ENCODE measurements at regions of chr2 and their contacts with region 1.

Region 1: GRCh38 chr2:176554101-176555048 is 285.1 kb downstream of the MTX2 start:
- DNase-seq: no peak
- H3K4me3 ChIP-seq: peak overlapping the region; percentile 34 to 48
- H3K27ac ChIP-seq: peak overlapping the region; percentile 42
- H3K4me1 ChIP-seq: peaks cover 11% of the 10 kb centered on the region
- H3K27me3 ChIP-seq: no peaks in the 10 kb centered on the region
- CTCF ChIP-seq: peak; percentile 73 to 77 (median 74)
- POLR2A ChIP-seq: no peak

Region 2: GRCh38 chr2:176140513-176141317 is 413.7 kb before region 1 on chr2:
- intact Hi-C with region 1: loop called (anchors 2 kb)
- DNase-seq: no peak
- H3K4me3 ChIP-seq: peak overlapping the region; percentile 42 to 44
- H3K27ac ChIP-seq: peak overlapping the region; percentile 57
- H3K4me1 ChIP-seq: peaks cover 18% of the 10 kb centered on the region
- H3K27me3 ChIP-seq: no peaks in the 10 kb centered on the region
- CTCF ChIP-seq: peak; percentile 76 to 94 (median 89)
- POLR2A ChIP-seq: no peak

Region 3: GRCh38 chr2:176638167-176639015 is 84.0 kb after region 1 on chr2:
- intact Hi-C with region 1: loop called (anchors 5 kb)
- DNase-seq: no peak
- H3K4me3 ChIP-seq: peak overlapping the region; percentile 58 to 84
- H3K27ac ChIP-seq: no peak overlapping the region
- H3K4me1 ChIP-seq: peaks cover 9% of the 10 kb centered on the region
- H3K27me3 ChIP-seq: no peaks in the 10 kb centered on the region
- CTCF ChIP-seq: peak; percentile 65 to 77 (median 67)
- POLR2A ChIP-seq: no peak